ENCODE measurements at regions of chr5 and their contacts with region 1.

Region 1: DNA sequence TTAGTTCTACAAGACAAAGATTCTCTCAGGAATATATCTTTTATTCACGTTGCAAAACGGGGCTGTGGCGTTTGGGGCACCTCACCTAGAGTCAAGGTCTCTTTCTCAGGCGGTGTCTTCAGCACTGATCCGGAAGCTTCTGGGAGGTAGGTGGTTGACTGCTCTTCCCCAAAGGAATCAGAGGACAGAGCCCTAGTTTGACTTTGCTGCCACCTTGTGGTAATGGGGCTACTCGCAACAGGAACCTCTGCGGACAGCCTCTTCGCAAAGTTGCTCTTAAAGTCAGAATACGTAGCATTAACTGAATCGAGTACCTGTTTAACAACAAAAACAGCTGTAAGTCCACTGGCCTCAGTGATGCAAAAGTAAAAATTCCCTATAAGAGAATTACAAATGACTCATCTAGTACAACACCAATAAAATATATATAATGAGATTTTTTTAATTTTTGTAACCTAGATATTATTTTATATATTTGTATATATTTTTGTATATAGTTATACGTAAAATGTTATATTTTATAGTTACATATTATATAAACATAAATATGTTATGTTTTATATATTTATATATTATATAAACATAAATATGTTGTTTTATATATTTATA is 13.3 kb upstream of the GPX8 start:
- ATAC-seq: peak; percentile 46 to 97 (median 94)
- H3K4me3 ChIP-seq: no peak overlapping the region
- H3K27ac ChIP-seq: no peak overlapping the region
- H3K4me1 ChIP-seq: no peaks in the 10 kb centered on the region

Region 2: DNA sequence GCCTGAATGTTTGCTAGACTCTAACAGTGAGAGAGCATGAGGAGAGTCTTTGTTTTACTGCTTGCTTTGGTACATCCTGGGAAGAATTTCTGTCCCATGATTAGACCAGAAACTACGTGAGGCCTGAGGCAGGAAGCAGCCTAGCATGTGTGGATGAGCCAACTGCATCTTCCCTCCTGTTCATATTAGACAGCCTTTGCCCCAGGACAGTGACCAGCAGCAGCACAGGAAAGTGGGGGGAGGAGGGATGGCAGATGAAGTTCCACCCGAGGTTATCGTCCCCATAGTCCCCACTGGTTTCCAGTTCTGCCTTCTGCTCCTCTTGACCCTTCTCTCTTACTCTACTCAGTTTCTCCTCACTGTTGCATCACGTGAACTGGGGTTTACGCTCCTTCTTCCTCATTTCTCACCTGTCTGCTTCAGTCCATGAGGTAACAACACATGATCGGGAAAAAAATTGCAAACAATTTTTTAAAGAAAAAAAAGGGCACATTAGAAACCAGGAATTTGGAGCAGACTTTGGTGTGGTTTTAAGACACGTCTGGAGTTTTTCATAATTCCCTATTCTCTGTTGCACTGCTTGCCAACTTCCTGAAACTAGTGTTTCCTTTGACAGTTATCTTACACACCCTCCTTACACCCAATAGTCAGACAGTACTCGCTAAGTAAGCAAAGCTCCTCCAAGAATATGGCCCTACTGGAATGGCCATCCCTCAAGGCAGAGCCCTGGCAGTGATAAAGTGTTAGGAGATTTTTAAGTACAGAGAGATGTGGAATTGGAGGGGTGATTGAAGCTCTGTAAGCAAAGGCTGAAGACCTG is 545.0 kb before region 1 on chr5:
- in situ Hi-C with region 1: no loop called
- ATAC-seq: no peak
- H3K4me3 ChIP-seq: no peak overlapping the region
- H3K27ac ChIP-seq: no peak overlapping the region
- H3K4me1 ChIP-seq: no peaks in the 10 kb centered on the region

Region 3: DNA sequence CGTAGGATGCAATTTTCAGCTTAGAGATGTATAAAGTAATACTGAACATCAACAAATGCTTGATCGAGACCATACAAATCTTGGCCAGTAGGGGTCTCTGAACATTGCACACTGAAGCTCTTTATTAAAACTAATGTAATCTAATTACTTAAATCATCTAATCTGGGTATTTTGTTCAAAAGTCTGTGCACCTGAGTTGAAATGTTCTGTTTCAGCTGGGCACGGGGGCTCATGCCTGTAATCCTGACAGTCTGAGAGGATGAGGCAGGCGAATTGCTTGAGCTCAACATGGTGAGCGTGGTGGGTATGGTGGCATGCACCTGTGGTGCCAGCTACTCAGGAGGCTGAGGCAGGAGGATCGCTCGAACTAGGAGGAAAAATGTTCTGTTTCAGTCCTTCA is 202.3 kb before region 1 on chr5:
- in situ Hi-C with region 1: loop called in 5 of 9 experiments (anchors 10 to 25 kb)
- ATAC-seq: peak in 3 of 8 experiments; percentile 38 to 53 (median 40)
- H3K4me3 ChIP-seq: no peak overlapping the region
- H3K27ac ChIP-seq: no peak overlapping the region
- H3K4me1 ChIP-seq: peaks cover 0 to 2% of the 10 kb centered on the region in 2 donors

Measured in motor neuron (in vitro differentiated cells).